ENCODE measurements at regions of chr17 and their contacts with region 1.

Region 1: DNA sequence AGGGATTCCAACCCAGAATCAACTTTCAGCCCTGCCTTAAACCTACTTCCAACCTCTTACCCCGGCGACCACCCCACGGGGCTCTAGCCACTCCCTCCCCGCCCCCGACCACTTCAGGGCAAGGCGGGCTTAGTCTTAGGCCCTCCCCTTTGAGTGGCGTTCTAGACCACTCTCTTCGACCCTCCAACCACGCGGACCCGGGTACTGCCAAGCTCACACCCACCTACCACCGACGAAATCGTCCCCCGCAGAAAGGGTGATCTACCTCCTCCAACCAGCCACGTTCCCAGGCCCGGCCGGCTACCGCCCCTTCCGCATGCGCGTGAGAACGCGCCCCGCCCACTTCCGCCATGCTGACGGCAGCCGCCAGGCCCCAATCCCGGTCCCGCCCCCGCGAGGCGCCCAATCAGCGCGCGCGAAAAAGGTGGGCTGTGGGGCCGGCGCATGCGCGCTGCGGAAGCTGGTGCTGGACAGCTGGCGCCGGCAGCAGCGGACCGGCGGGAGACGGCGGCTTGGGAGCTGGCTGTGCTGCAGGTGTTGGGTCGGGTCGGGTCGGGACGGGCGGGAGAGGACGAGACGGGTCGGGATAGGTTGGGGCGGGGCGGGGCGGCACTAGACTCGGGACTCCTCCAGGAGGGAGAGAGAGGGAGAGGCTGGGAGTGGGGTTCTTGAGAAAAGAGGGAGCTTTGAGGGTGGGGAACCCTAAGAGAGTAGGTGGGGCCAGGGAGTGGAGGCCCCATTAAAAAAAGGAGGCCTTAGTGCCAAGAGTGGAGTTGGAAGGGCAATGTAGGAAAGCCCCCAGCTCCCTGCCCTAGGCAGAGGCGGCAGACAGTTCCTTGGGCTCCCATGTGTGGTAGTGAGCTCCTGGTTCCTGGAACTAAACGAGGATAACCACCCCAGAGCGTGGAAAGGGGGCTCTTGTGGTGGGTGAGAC is at the start of gene NAT9:
- DNase-seq: peak; percentile 98
- H3K4me3 ChIP-seq: peak within 1 kb of the TSS; percentile 92
- H3K27ac ChIP-seq: peak within 1 kb of the TSS; percentile 90
- H3K4me1 ChIP-seq: no peaks in the 10 kb centered on the region
- H3K27me3 ChIP-seq: no peaks in the 10 kb centered on the region
- CTCF ChIP-seq: no peak
- total RNA-seq, gene NAT9: 55.6 and 60.6 TPM in 2 replicates

Region 2: DNA sequence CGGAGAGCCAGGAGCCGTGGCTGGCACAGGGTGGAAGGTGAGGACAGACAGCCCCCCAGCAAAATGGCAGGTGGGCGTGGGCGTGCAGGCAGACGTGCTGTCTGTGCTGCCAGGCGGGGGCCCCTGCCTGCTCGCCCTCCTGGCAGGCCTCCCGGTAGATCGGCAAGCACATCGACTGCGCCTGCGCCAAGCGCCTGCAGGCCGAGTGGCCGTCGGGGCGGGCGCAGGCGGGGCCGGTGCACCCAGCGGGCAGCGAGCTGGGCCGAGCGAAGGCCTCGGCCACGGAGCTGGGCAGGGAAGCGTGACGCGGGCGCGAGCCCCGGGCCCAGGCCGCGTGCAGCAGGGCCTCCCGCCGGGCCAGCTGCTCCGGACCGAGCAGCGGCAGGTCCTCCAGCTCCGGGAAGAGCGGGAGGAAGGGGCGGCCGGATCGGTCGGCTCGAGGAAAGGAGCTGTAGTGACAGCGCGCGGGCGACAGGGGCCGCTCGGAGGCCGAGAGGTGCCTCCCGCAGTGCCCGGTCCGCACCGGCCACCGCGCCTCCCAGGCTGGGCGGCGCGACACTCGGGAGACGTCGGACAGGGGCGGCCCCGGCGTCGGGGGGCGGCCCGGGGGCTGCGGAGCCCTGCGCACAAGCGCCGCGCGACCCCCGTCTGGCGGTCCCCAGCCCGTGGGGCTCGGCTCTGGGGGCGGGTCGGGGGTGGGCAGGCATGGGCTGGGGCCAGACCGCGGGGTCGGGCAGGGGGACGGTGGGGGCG is 66.5 kb after region 1 on chr17:
- CTCF ChIA-PET with region 1: interaction called, 10 read pairs
- POLR2A ChIA-PET with region 1: no interaction called
- intact Hi-C with region 1: no loop called
- DNase-seq: peak; percentile 72
- H3K4me3 ChIP-seq: peak overlapping the region; percentile 51
- H3K27ac ChIP-seq: peak overlapping the region; percentile 29
- H3K4me1 ChIP-seq: peaks cover 33% of the 10 kb centered on the region
- H3K27me3 ChIP-seq: no peaks in the 10 kb centered on the region
- CTCF ChIP-seq: peak; percentile 43

Measured in A673 (cell line).